A673 (cell line): ENCODE measurements at regions of chr5 and their contacts with region 1.

Region 1: DNA sequence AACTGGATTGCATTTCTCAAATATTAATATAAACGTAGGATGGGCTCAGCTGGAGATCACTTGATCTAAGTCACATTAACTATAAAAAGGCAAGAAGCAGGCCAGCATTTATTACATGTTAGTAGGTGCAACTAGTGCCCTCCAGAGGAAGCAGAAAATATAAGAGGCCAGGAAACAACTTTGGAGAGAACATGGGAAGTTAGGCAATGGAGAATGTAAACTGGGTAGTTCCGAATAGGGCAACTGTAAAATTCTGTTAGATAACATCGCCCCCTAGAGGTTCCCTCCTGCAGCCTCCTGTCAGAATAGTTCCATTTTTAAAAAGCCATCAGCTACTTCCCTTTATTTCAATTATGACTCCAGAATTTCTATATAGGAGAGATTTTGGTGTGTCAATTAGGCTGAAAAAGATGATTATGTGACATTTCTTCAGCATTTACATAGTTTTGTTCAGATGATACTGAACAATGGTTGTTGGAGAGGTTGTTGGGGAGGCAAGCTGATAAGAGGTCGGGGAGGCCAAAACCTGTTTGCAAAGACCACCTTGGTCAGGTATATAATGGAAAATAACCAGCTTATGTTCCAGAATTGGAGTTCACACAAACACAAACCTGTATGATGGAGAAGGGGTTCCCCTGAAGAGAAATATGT is 22.4 kb downstream of the CCL28 start:
- DNase-seq: peak; percentile 92
- H3K4me3 ChIP-seq: no peak overlapping the region
- H3K27ac ChIP-seq: no peak overlapping the region
- H3K4me1 ChIP-seq: no peaks in the 10 kb centered on the region
- H3K27me3 ChIP-seq: no peaks in the 10 kb centered on the region
- CTCF ChIP-seq: peak; percentile 96

Region 2: GRCh38 chr5:43073597-43074546 is 315.9 kb before region 1 on chr5:
- CTCF ChIA-PET with region 1: no interaction called
- POLR2A ChIA-PET with region 1: no interaction called
- intact Hi-C with region 1: loop called (anchors 10 kb)
- DNase-seq: peak; percentile 62
- H3K4me3 ChIP-seq: no peak overlapping the region
- H3K27ac ChIP-seq: no peak overlapping the region
- H3K4me1 ChIP-seq: peaks cover 6% of the 10 kb centered on the region
- H3K27me3 ChIP-seq: no peaks in the 10 kb centered on the region
- CTCF ChIP-seq: peak; percentile 81

Region 3: DNA sequence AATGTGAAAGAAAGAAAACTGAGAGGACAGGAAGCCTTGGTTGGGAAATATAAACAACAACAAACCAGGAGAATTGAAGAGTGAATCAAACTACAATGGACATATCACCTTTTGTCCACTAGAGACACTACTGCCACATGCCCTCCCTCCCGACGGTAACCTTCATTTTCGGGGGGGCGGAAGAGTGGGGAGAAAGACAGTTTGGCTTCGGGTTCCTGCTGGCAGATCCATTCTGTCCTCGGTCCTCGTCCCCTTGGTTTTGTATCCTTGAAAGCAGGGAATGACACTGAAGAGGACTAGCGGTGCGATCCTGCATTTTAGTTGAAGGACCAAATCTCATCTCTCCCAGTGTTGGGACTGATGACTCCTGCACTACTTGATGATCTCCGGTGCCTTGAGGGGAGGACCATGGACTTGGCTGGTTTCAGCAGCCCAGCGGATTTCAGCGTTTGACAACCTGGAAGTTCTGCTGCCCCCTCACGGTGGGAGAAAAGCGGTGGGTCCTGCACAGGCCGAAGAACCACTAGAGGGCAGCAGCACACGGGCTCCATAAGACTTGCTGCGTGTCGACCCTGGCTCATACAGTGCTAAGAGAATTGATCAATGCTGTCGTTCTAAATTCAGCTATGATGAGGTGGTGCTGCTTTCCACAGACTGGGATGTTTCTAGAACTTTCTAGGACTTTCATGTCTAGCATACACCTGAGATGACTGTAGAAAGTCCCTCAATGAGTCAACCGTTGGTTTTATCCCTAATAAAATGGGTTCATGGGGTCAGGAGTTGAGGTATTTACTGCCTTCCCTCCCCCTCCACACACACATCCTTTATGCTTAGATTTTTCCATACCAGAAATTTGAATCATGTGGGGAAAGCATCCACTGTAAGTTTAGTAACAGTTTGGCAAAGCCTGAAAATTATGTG is 284.2 kb before region 1 on chr5:
- CTCF ChIA-PET with region 1: no interaction called
- POLR2A ChIA-PET with region 1: no interaction called
- intact Hi-C with region 1: loop called (anchors 2 kb)
- DNase-seq: peak; percentile 97
- H3K4me3 ChIP-seq: peak overlapping the region; percentile 41
- H3K27ac ChIP-seq: no peak overlapping the region
- H3K4me1 ChIP-seq: no peaks in the 10 kb centered on the region
- H3K27me3 ChIP-seq: no peaks in the 10 kb centered on the region
- CTCF ChIP-seq: peak; percentile 100

Region 4: DNA sequence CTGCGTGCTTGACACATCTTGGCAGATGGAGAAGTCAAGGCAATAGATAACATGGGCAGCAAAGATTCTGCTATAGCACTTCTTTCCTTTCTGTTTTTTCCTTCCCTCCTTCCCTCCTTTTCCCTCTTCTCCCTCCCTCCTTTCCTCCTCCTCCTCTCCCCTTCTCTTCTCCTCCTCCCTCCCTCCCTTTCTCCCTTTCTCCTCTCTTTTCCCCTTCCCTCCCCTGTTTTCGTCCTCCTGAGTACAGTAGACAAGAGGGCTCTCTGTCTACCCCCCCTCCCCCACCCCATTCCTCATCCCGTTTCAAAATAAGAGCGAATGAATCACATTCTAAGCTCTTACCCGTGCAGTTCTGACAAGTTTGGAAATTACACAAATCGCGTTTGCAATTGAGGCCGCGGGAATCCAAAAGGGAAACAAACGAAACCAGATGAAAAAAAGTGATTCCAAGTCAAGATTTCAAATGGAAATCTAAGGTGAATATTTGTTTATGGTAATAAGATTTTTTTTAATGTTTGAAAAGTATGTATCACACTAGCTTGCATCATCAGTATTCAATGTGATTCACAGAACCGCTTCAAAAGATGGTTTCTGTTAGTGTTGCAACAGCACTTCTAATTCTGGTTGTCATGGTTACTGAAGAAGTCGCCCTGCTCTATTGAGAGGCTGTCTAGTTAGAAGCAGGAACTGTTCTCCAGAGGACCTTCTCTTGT is 196.5 kb before region 1 on chr5:
- CTCF ChIA-PET with region 1: interaction called, 10 read pairs
- POLR2A ChIA-PET with region 1: no interaction called
- intact Hi-C with region 1: no loop called
- DNase-seq: peak; percentile 86
- H3K4me3 ChIP-seq: peak overlapping the region; percentile 47
- H3K27ac ChIP-seq: no peak overlapping the region
- H3K4me1 ChIP-seq: peaks cover 25% of the 10 kb centered on the region
- H3K27me3 ChIP-seq: peaks cover 20% of the 10 kb centered on the region
- CTCF ChIP-seq: no peak

Region 5: GRCh38 chr5:43227655-43228054 is 162.1 kb before region 1 on chr5:
- CTCF ChIA-PET with region 1: no interaction called
- POLR2A ChIA-PET with region 1: no interaction called
- intact Hi-C with region 1: loop called (anchors 1 kb)
- DNase-seq: peak; percentile 46
- H3K4me3 ChIP-seq: no peak overlapping the region
- H3K27ac ChIP-seq: no peak overlapping the region
- H3K4me1 ChIP-seq: no peaks in the 10 kb centered on the region
- H3K27me3 ChIP-seq: no peaks in the 10 kb centered on the region
- CTCF ChIP-seq: no peak; the same call in 1 of the 2 replicates

Region 6: DNA sequence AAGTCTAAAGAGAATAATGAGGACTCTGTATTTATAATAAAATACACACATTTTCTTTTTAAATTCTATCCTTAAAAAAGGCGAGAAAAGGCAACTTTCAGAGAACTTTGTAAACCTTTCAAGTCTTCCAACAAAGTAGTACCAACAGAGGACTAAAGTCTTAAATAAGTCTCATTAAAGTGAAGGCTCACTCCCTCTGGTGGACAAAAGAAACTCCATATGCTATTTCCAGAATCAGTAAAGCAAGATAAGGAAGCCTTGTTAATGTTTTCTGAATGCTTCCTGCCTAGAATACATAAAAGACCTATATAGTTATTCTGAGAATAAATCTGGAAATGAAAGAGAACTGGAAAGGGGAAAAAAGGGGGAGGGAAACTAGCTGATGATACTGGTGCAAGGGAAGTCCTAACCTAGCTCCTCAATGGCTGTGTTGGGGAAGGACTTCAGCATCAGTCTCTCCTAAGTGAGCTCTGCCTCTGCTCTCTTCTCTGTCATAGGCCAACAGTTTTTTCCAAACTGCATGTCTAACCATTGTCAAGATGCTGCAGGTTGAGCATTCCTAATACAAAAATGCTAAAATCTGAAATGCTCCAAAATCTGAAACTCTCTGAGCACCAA is 83.7 kb before region 1 on chr5:
- CTCF ChIA-PET with region 1: no interaction called
- POLR2A ChIA-PET with region 1: no interaction called
- intact Hi-C with region 1: loop called (anchors 5 kb)
- DNase-seq: peak; percentile 80
- H3K4me3 ChIP-seq: no peak overlapping the region
- H3K27ac ChIP-seq: no peak overlapping the region
- H3K4me1 ChIP-seq: peaks cover 44% of the 10 kb centered on the region
- H3K27me3 ChIP-seq: no peaks in the 10 kb centered on the region
- CTCF ChIP-seq: peak; percentile 85